CD4-positive, alpha-beta memory T cell (primary cell): ENCODE measurements at regions of chr2 and their contacts with region 1.

Region 1: DNA sequence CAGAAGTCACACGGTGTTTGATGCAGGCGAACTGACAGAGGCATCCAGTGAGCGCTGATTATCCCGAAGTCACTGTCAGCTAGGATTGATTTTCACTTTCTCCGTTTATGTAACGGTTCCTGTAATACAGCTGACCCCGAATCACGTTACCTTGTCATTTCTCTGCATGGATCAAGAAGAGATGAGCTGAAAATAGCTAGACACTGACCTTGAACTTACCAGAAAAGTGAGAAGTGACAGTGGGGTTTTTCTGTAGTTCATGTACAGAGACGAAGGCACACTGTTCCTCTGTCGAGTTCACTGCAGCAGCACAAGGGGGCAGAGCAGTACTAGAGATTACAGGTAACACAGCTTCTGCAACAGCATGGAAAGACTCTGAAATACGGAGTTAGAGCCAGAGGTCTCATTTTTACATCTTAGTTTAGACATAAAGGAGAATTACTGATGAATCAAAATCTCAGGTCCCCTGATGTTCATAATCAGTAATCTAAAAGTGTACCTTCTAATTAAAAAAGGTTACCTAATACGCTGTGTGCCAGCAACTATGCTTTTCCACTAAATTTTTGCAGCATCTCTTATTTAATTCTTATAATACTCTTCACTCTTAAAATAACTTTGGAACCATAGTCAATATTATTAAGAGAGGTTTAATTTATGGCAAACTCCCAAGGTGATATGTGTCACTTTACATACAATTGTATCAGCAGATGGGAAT is 33.1 kb downstream of the ARHGAP15 start:
- DNase-seq: peak; percentile 62 to 78 (median 71)
- H3K4me3 ChIP-seq: no peak overlapping the region
- H3K4me3 Mint-ChIP-seq: peak overlapping the region in 4 of 8 donors; percentile 1 to 27 (median 6)
- H3K27ac ChIP-seq: no peak overlapping the region
- H3K27ac Mint-ChIP-seq: peak overlapping the region; percentile 30 to 90 (median 78)
- H3K4me1 ChIP-seq: peaks cover 83% of the 10 kb centered on the region
- H3K4me1 Mint-ChIP-seq: peaks cover 70 to 92% (median 82%) of the 10 kb centered on the region in 4 donors
- H3K27me3 ChIP-seq: no peaks in the 10 kb centered on the region
- H3K27me3 Mint-ChIP-seq: no peaks in the 10 kb centered on the region

Region 2: GRCh38 chr2:143110758-143111428 is 51.4 kb before region 1 on chr2:
- CTCF ChIA-PET with region 1: interaction called, 129 read pairs
- POLR2A ChIA-PET with region 1: interaction called, 16 read pairs
- intact Hi-C with region 1: loop called (anchors 1 kb)
- DNase-seq: peak; percentile 59 to 72 (median 67)
- H3K4me3 ChIP-seq: no peak overlapping the region
- H3K4me3 Mint-ChIP-seq: peak overlapping the region in 5 of 8 donors; percentile 17 to 53 (median 42)
- H3K27ac ChIP-seq: peak overlapping the region; percentile 33
- H3K27ac Mint-ChIP-seq: peak overlapping the region in 6 of 7 donors; percentile 63 to 89 (median 74)
- H3K4me1 ChIP-seq: peaks cover 20% of the 10 kb centered on the region
- H3K4me1 Mint-ChIP-seq: peaks cover 17 to 25% (median 21%) of the 10 kb centered on the region in 4 donors
- H3K27me3 ChIP-seq: no peaks in the 10 kb centered on the region
- H3K27me3 Mint-ChIP-seq: no peaks in the 10 kb centered on the region

Region 3: GRCh38 chr2:143140864-143141661 is 21.2 kb before region 1 on chr2:
- CTCF ChIA-PET with region 1: interaction called, 26 read pairs
- POLR2A ChIA-PET with region 1: interaction called, 8 read pairs
- intact Hi-C with region 1: no loop called
- DNase-seq: no peak
- H3K4me3 ChIP-seq: peak overlapping the region in 1 of 2 donors; percentile 4
- H3K4me3 Mint-ChIP-seq: peak overlapping the region; percentile 63 to 88 (median 78)
- H3K27ac ChIP-seq: no peak overlapping the region
- H3K27ac Mint-ChIP-seq: peak overlapping the region in 5 of 7 donors; percentile 45 to 76 (median 62)
- H3K4me1 ChIP-seq: peaks cover 97% of the 10 kb centered on the region
- H3K4me1 Mint-ChIP-seq: peaks cover 77 to 98% (median 86%) of the 10 kb centered on the region in 4 donors
- H3K27me3 ChIP-seq: no peaks in the 10 kb centered on the region
- H3K27me3 Mint-ChIP-seq: no peaks in the 10 kb centered on the region

Region 4: GRCh38 chr2:143177096-143177786 is 15.0 kb after region 1 on chr2:
- CTCF ChIA-PET with region 1: interaction called, 25 read pairs
- POLR2A ChIA-PET with region 1: interaction called, 3 read pairs
- intact Hi-C with region 1: no loop called
- DNase-seq: peak in 3 of 5 donors; percentile 16 to 18 (median 18)
- H3K4me3 ChIP-seq: peak overlapping the region in 1 of 2 donors; percentile 34
- H3K4me3 Mint-ChIP-seq: peak overlapping the region; percentile 77 to 93 (median 86)
- H3K27ac ChIP-seq: peak overlapping the region; percentile 66
- H3K27ac Mint-ChIP-seq: peak overlapping the region; percentile 90 to 97 (median 94)
- H3K4me1 ChIP-seq: peaks cover 57% of the 10 kb centered on the region
- H3K4me1 Mint-ChIP-seq: peaks cover 47 to 66% (median 57%) of the 10 kb centered on the region in 4 donors
- H3K27me3 ChIP-seq: no peaks in the 10 kb centered on the region
- H3K27me3 Mint-ChIP-seq: no peaks in the 10 kb centered on the region

Region 5: GRCh38 chr2:143217512-143218115 is 55.3 kb after region 1 on chr2:
- CTCF ChIA-PET with region 1: interaction called, 62 read pairs
- POLR2A ChIA-PET with region 1: interaction called, 6 read pairs
- intact Hi-C with region 1: loop called (anchors 1 kb)
- DNase-seq: no peak
- H3K4me3 ChIP-seq: no peak overlapping the region
- H3K4me3 Mint-ChIP-seq: peak overlapping the region in 2 of 8 donors; percentile 9 to 24
- H3K27ac ChIP-seq: no peak overlapping the region
- H3K27ac Mint-ChIP-seq: peak overlapping the region; percentile 42 to 83 (median 70)
- H3K4me1 ChIP-seq: peaks cover 37% of the 10 kb centered on the region
- H3K4me1 Mint-ChIP-seq: peaks cover 42 to 61% (median 51%) of the 10 kb centered on the region in 4 donors
- H3K27me3 ChIP-seq: no peaks in the 10 kb centered on the region
- H3K27me3 Mint-ChIP-seq: no peaks in the 10 kb centered on the region

Region 6: DNA sequence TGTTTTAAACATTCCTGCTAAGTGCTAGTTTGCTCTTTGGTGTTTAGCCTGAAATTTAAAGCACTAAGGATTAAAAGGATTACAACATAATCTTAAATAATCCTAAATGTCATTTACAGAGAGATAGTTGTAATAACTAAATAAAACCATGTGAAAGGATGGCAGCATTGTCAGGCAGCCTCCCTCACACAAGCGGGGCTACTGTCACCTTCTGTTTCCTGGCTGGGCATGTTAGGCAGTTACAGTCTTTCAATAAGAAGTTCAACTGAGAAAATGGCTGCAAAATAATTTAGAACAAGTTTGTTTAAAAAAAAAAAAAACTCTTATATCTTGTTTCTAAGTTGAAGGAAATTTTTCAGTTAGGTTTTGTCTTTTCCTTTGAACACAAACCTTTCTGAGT is 91.8 kb after region 1 on chr2:
- CTCF ChIA-PET with region 1: interaction called, 227 read pairs
- POLR2A ChIA-PET with region 1: interaction called, 90 read pairs
- intact Hi-C with region 1: loop called (anchors 1 kb)
- DNase-seq: peak in 3 of 5 donors; percentile 28 to 65 (median 32)
- H3K4me3 ChIP-seq: peak overlapping the region in 1 of 2 donors; percentile 10
- H3K4me3 Mint-ChIP-seq: peak overlapping the region; percentile 49 to 89 (median 74)
- H3K27ac ChIP-seq: peak overlapping the region; percentile 79
- H3K27ac Mint-ChIP-seq: peak overlapping the region; percentile 84 to 99 (median 92)
- H3K4me1 ChIP-seq: peaks cover 89% of the 10 kb centered on the region
- H3K4me1 Mint-ChIP-seq: peaks cover 56 to 73% (median 65%) of the 10 kb centered on the region in 4 donors
- H3K27me3 ChIP-seq: no peaks in the 10 kb centered on the region
- H3K27me3 Mint-ChIP-seq: no peaks in the 10 kb centered on the region

Region 7: GRCh38 chr2:143375384-143375880 is 213.2 kb after region 1 on chr2:
- CTCF ChIA-PET with region 1: no interaction called
- POLR2A ChIA-PET with region 1: no interaction called
- intact Hi-C with region 1: no loop called
- DNase-seq: no peak
- H3K4me3 ChIP-seq: no peak overlapping the region
- H3K4me3 Mint-ChIP-seq: peak overlapping the region in 3 of 8 donors; percentile 3 to 28 (median 9)
- H3K27ac ChIP-seq: no peak overlapping the region
- H3K27ac Mint-ChIP-seq: peak overlapping the region in 4 of 7 donors; percentile 15 to 66 (median 42)
- H3K4me1 ChIP-seq: peaks cover 11% of the 10 kb centered on the region
- H3K4me1 Mint-ChIP-seq: peaks cover 28 to 62% (median 44%) of the 10 kb centered on the region in 4 donors
- H3K27me3 ChIP-seq: no peaks in the 10 kb centered on the region
- H3K27me3 Mint-ChIP-seq: no peaks in the 10 kb centered on the region